ENCODE measurements at regions of chr4 and their contacts with region 1.

Region 1: GRCh38 chr4:42074294-42074693 is 78.2 kb downstream of the BEND4 start:
- DNase-seq: no peak
- ATAC-seq: no peak

Region 2: DNA sequence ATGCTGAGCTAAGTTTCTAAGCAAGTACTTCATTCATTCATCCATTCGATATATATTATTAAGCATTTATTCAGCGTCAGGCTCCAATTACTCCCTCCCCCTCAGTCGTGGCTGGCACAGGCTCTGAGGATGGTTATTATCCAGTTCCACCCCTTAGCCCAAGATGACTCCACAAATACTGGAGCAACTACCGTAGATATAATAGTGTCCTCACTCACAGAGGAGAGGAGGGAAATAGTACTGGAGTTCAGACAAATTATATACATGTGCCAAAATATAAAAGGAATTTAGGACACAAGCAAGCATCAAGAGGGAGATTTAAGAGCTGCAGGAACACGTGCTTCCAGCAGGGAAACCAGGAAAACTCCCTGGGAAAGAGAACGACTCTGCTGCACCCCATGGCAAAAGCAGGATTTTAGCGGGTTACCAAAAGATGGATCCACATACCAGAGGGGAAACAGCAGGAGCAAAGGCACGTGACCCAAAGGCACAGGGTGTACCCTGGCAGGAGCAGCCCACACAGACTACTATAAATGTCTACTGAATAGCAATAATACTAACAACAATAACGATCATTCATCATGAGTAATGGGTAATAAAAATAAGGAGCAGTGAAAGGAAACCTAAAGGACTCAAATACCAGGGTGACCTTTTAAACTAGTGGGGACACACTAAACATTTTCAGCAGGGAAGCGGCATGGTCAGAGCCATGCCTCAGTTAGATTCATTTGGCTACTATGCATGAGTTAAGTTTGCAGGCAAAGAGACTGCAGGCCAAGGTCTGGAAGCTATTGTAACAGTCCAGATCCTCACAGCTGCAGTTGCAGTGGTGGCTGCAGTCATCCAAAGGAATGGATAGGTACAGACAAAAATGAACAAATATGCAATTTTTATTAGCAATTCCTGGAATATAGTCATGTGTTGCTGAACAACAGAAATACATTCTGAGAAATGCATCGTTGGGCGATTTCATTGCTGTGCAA is 1013.7 kb before region 1 on chr4:
- intact Hi-C with region 1: loop called (anchors 5 kb)
- DNase-seq: no peak
- ATAC-seq: peak; percentile 30

Measured in sciatic nerve (tissue), 2 donors.